ENCODE measurements at regions of chr5 and their contacts with region 1.

Region 1: DNA sequence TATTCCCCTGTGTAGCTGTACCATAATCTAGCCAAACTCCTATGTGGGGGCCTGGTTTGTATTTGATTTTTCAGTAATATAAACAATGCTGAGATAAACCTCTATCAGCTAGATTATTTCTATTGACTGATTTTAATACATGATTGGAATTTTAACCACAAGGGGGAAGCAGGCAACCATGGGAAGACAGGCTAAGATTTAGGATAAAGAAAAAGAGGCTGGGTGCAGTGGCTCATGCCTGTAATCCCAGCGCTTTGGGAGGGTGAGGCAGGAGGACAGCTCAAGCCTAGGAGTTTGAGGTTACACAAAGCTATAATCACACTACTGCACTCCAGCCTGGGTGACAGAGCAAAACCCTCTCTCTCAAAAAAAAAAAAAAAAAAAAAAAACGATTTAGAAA is 18.1 kb upstream of the GPX3 start:
- H3K4me3 Mint-ChIP-seq: no peak overlapping the region
- H3K27ac Mint-ChIP-seq: no peak overlapping the region
- H3K4me1 Mint-ChIP-seq: peaks cover 20% of the 10 kb centered on the region
- H3K27me3 Mint-ChIP-seq: peaks cover 1% of the 10 kb centered on the region

Region 2: DNA sequence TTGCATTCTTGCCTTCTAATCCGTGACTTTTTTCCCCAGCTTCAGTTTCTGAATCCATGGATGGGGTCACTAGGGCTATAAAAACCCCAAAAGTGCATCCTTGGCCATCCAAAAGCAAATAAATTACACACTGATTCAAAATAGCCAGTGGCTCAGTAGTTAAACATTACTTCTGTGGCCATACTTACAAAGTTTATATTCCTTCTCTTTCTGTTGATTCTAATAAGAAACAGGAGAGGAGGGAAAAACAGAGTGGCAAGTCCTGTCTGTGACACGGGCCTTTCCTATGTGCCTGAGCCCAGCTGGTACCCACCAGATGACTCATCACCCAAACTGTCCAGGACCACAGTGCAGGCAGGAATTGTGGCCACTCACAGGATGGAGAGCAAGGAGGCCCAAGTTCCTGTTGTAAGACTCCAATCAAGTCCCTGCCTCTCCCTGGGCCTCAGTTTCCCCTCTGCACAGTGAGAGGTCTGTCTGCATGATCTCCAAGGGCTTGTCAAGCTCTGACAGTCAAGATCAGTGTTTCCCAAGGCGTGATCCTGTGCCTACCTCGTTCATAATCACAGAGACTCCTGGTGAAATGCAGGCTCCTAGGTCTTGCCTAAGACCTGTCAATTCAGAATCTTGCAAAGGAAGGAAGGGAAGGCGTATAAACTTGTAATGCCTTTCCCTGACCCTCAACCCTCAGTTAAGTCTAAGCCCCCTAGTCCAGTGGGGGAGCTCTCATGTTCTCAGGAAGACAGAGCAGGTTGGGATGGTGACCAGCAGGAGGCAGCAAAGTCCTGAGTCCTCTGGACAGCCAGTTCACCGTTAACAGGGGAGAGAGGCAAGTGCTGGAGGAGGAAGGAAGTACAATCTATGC is 49.0 kb after region 1 on chr5:
- intact Hi-C with region 1: loop called (anchors 2 kb)
- H3K4me3 Mint-ChIP-seq: no peak overlapping the region
- H3K27ac Mint-ChIP-seq: peak overlapping the region; percentile 56
- H3K4me1 Mint-ChIP-seq: peaks cover 50% of the 10 kb centered on the region
- H3K27me3 Mint-ChIP-seq: no peaks in the 10 kb centered on the region

Region 3: DNA sequence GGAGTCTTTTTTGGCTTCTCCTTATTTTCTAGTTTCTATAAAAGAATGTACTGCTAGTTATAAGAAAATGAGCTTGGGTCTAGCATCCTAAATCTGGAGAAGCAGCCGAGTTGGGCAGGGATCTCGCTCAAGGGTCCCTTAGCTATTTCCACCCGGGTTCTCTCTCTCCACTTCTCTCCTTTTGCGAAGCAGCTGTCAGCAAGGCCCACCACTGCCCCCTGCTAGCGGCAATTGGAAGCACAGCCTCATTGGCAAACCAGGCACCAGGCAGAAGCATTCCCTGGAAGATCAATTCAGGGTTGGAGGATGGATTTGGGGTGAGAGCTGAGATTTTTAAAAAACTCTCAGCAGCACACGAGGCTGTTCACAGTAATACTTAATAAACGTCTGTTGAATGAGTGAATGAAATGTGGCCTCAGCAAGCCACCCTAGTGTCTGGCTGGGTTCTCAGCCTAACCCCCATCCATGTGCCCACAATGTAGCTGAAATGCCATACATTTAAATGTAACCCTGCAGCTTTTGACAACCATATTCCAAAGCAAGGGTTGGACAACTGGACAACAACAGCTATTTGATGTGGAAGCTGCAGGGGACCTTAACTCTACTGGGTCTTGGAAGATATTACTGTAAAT is 113.1 kb after region 1 on chr5:
- intact Hi-C with region 1: loop called (anchors 1 kb)
- H3K4me3 Mint-ChIP-seq: no peak overlapping the region
- H3K27ac Mint-ChIP-seq: no peak overlapping the region
- H3K4me1 Mint-ChIP-seq: no peaks in the 10 kb centered on the region
- H3K27me3 Mint-ChIP-seq: no peaks in the 10 kb centered on the region